ENCODE measurements at regions of chr15 and their contacts with region 1.

Region 1: GRCh38 chr15:65400760-65401610 is 21.8 kb downstream of the IGDCC4 start:
- DNase-seq: peak; percentile 80 to 99
- ATAC-seq: peak; percentile 93 to 97
- H3K4me3 ChIP-seq: no peak overlapping the region
- H3K27ac ChIP-seq: peak overlapping the region; percentile 21 to 39; a peak in 1 of 6 replicates
- H3K4me1 ChIP-seq: peaks cover 5% of the 10 kb centered on the region
- CTCF ChIP-seq: peak; percentile 69
- EP300 ChIP-seq: no peak
- POLR2A ChIP-seq: no peak
- RAD21 ChIP-seq: peak; percentile 87 to 90

Region 2: GRCh38 chr15:65310431-65311137 is 90.4 kb before region 1 on chr15:
- CTCF ChIA-PET with region 1: interaction called, 228 read pairs
- POLR2A ChIA-PET with region 1: no interaction called
- DNase-seq: no peak
- ATAC-seq: no peak
- H3K4me3 ChIP-seq: no peak overlapping the region
- H3K27ac ChIP-seq: no peak overlapping the region
- H3K4me1 ChIP-seq: peaks cover 12% of the 10 kb centered on the region; the same call in 2 of the 3 replicates
- CTCF ChIP-seq: no peak
- EP300 ChIP-seq: no peak
- POLR2A ChIP-seq: no peak
- RAD21 ChIP-seq: no peak

Region 3: GRCh38 chr15:65336493-65337455 is 64.2 kb before region 1 on chr15:
- CTCF ChIA-PET with region 1: interaction called, 12 read pairs
- POLR2A ChIA-PET with region 1: no interaction called
- DNase-seq: no peak
- ATAC-seq: peak in 1 of 2 experiments; percentile 5; a peak in 1 of 6 replicates
- H3K4me3 ChIP-seq: no peak overlapping the region
- H3K27ac ChIP-seq: no peak overlapping the region
- H3K4me1 ChIP-seq: no peaks in the 10 kb centered on the region
- CTCF ChIP-seq: no peak
- EP300 ChIP-seq: no peak
- POLR2A ChIP-seq: no peak
- RAD21 ChIP-seq: no peak

Region 4: DNA sequence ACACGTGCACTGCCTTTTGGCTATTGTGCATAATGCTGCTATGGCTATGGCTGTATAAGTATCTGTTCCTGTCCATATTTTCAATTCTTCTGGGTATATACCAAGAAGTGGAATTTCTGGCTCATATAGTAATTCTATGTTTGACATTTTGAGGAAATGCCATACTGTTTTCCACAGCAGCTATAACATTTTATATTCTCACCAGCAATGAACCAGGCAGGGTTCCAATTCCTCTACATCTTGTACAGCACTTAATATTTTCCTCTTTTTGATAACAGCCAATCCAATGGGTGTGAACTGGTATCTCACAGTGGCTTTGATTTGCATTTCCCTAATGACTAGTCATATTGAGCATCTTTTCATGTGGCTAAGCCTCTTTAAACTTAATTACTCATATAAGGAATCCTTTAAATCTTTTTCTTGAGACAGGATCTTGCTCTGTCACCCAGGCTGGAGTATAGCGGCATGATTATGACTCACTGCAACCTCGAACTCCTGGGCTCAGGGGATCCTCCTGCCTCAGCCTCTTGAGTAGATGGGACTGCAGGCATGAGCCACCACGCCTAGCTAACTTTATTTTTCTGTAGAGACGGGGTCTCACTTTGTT is 59.9 kb after region 1 on chr15:
- CTCF ChIA-PET with region 1: interaction called, 24 read pairs
- POLR2A ChIA-PET with region 1: no interaction called
- DNase-seq: no peak
- ATAC-seq: no peak
- H3K4me3 ChIP-seq: no peak overlapping the region
- H3K27ac ChIP-seq: no peak overlapping the region
- H3K4me1 ChIP-seq: no peaks in the 10 kb centered on the region
- CTCF ChIP-seq: no peak
- EP300 ChIP-seq: no peak
- POLR2A ChIP-seq: no peak
- RAD21 ChIP-seq: no peak

Region 5: DNA sequence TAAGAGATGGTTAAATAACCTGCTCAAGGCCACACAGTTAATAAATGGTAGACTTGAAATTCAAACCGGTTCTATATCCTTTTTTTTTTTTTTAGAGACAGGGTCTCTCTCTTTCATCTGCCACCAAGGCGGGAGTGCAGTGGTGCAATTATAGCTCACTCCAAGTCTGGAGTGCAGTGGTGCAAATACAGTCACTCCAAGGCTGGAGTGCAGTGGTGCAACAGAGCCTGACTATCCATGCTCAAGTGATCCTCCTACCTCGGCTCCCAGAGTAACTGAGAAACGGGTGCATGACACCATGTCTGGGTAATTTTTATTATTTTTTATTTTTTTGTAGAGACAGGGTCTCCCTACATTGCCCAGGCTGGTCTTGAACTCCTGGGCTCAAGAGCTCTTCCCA is 93.1 kb after region 1 on chr15:
- CTCF ChIA-PET with region 1: interaction called, 12 read pairs
- POLR2A ChIA-PET with region 1: no interaction called
- DNase-seq: no peak
- ATAC-seq: no peak
- H3K4me3 ChIP-seq: no peak overlapping the region
- H3K27ac ChIP-seq: no peak overlapping the region
- H3K4me1 ChIP-seq: no peaks in the 10 kb centered on the region
- CTCF ChIP-seq: no peak
- EP300 ChIP-seq: no peak
- POLR2A ChIP-seq: no peak
- RAD21 ChIP-seq: no peak

Region 6: GRCh38 chr15:65530314-65531122 is 129.5 kb after region 1 on chr15 and contains the start of gene HACD3:
- CTCF ChIA-PET with region 1: interaction called, 10 read pairs
- POLR2A ChIA-PET with region 1: no interaction called
- DNase-seq: peak; percentile 90 to 97
- ATAC-seq: peak; percentile 94 to 96
- H3K4me3 ChIP-seq: peak within 1 kb of the TSS; percentile 78
- H3K27ac ChIP-seq: peak within 1 kb of the TSS; percentile 85 to 91
- H3K4me1 ChIP-seq: peaks cover 44% of the 10 kb centered on the region
- CTCF ChIP-seq: no peak
- EP300 ChIP-seq: no peak
- POLR2A ChIP-seq: peak; percentile 89
- RAD21 ChIP-seq: no peak
- polyA plus RNA-seq, gene HACD3: 186 and 212 TPM in 2 replicates

Measured in A549 (cell line).